ENCODE measurements at regions of chr14 and their contacts with region 1.

Region 1: GRCh38 chr14:90399541-90400444 is 3.0 kb downstream of the CALM1 start:
- DNase-seq: peak; percentile 68 to 96
- H3K4me3 ChIP-seq: peak overlapping the region; percentile 94 to 98
- H3K27ac ChIP-seq: peak overlapping the region; percentile 90 to 97
- H3K4me1 ChIP-seq: peaks cover 0 to 36% of the 10 kb centered on the region in 2 donors
- H3K27me3 ChIP-seq: no peaks in the 10 kb centered on the region
- CTCF ChIP-seq: peak; percentile 97 to 99 (median 98)

Region 2: GRCh38 chr14:89954070-89955028 is 445.4 kb before region 1 on chr14 and contains the start of gene EFCAB11:
- intact Hi-C with region 1: loop called (anchors 10 kb)
- DNase-seq: peak; percentile 87 to 98
- H3K4me3 ChIP-seq: peak within 1 kb of the TSS; percentile 82 to 83
- H3K27ac ChIP-seq: peak within 1 kb of the TSS; percentile 91 to 94
- H3K4me1 ChIP-seq: peaks cover 4 to 11% of the 10 kb centered on the region in 2 donors
- H3K27me3 ChIP-seq: no peaks in the 10 kb centered on the region
- CTCF ChIP-seq: no peak
- total RNA-seq, gene EFCAB11: not detected

Region 3: DNA sequence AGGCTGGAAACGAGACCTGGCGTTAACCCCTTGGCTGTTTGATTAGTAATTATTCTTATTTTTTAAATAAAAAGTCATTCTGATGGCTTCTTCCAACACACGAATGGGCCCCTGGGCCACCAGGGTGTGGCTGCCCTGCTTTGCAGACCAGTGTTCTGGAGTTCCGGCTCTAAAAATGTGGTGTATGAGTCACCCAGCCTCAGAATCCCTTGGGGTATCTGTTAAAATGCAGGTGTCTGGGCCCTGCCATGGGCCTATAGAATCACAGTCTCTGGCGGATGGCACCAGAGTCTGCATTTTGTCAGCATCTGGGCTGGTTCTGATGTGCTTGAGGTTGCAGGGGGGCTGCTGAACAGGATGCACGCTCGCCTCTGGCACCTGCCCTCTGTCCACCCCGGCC is 146.0 kb before region 1 on chr14:
- intact Hi-C with region 1: no loop called
- DNase-seq: no peak
- H3K4me3 ChIP-seq: no peak overlapping the region
- H3K27ac ChIP-seq: no peak overlapping the region
- H3K4me1 ChIP-seq: peaks cover 0 to 4% of the 10 kb centered on the region in 2 donors
- H3K27me3 ChIP-seq: no peaks in the 10 kb centered on the region
- CTCF ChIP-seq: no peak

Region 4: GRCh38 chr14:90383075-90383730 is 16.6 kb before region 1 on chr14:
- intact Hi-C with region 1: loop called (anchors 1 kb)
- DNase-seq: peak; percentile 97 to 100
- H3K4me3 ChIP-seq: peak overlapping the region; percentile 72 to 75
- H3K27ac ChIP-seq: peak overlapping the region; percentile 100
- H3K4me1 ChIP-seq: peaks cover 0 to 16% of the 10 kb centered on the region in 2 donors
- H3K27me3 ChIP-seq: no peaks in the 10 kb centered on the region
- CTCF ChIP-seq: peak in 1 of 3 experiments; percentile 9

Region 5: DNA sequence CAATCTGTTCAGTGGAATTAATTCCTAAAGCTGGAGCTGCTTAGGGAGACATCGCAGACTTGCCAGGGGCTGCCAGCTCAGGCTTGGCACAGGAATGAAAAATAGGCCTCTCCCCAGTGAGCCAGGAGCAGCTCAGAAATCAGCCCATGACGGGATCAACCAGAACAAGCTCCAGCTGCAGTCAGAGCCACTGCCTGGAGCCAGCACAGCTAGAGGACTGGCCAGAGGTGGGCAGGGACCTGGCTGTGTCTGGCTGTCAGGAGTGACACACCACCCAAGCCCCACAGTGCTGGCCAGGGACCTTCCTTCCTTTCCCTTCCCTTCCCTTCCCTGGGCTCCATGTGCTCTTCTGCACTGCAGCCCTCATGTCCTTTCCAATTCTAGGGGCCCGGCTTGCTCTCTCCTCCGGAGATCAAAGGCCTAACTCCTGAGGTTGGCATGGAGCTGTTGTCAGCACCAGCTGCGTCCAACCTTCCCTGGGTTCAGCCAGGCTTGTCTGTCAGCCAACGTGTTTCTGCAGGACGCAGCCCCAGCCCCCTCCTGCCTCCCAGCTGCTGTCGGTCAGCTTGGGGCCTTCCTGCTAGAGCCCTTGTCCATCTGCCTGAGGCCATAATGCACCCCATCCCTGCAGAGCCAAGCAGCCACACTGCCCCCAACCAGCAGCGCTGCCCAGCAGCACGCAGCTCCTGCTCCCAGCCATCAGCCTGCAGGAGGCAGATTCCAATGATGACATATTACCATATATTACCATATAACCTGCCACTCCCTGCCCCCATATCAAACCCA is 146.4 kb after region 1 on chr14:
- intact Hi-C with region 1: loop called (anchors 5 kb)
- DNase-seq: peak; percentile 41 to 88
- H3K4me3 ChIP-seq: peak overlapping the region in 1 of 2 donors; percentile 19
- H3K27ac ChIP-seq: peak overlapping the region; percentile 83 to 84
- H3K4me1 ChIP-seq: peaks cover 12 to 22% of the 10 kb centered on the region in 2 donors
- H3K27me3 ChIP-seq: no peaks in the 10 kb centered on the region
- CTCF ChIP-seq: no peak

Region 6: DNA sequence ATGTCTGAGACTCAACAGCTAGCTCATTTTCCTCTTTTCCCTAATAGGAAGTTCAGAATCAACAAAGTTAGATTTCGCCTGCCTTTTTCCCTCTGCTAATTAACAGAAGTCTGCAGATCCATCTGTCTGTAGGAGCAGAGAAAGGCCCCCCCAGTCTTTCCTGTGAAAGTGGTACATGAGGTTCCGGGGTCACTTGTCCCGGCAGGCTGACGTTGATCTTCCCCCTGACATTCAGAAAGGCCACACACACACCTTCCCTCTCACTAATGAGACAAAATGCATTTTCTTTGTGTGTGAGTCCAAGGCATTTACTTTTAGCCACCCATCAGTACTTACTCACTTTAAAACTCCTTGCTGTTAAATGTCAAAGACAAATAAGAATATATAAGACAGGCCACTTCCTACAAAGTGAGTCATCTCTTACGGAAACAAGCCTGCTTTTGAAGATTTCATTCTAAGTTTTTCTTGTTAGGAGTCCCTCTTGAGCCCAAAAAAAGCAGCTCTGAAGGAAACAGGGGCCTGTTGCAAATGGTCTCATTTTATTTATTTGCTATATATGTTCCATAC is 277.8 kb after region 1 on chr14:
- intact Hi-C with region 1: loop called (anchors 2 kb)
- DNase-seq: no peak
- H3K4me3 ChIP-seq: no peak overlapping the region
- H3K27ac ChIP-seq: peak overlapping the region; percentile 77 to 92
- H3K4me1 ChIP-seq: peaks cover 8 to 20% of the 10 kb centered on the region in 2 donors
- H3K27me3 ChIP-seq: no peaks in the 10 kb centered on the region
- CTCF ChIP-seq: no peak

Region 7: GRCh38 chr14:90827916-90828610 is 428.3 kb after region 1 on chr14:
- intact Hi-C with region 1: loop called (anchors 5 kb)
- DNase-seq: peak; percentile 76 to 96
- H3K4me3 ChIP-seq: peak overlapping the region; percentile 35 to 66
- H3K27ac ChIP-seq: peak overlapping the region; percentile 58 to 82
- H3K4me1 ChIP-seq: peaks cover 4 to 5% of the 10 kb centered on the region in 2 donors
- H3K27me3 ChIP-seq: no peaks in the 10 kb centered on the region
- CTCF ChIP-seq: no peak

Region 8: DNA sequence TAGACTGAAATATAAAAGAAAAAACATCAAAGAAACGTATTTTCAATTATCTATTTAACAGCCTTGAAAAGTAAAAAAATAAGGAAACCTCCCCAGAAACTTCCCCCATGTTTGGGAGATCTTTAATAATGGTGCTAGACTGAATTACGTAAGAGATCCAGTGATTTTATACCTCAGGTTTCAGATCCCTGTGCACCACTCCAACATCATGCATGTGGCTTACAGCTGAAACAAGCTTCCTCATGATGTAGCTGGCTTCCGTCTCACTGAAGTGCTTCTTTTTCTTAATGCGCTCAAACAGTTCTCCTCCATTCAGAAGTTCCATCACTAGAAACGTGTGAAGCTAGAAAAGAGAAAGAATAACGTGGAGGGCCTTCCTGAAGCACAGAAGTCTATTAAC is 494.4 kb after region 1 on chr14:
- intact Hi-C with region 1: no loop called
- DNase-seq: no peak
- H3K4me3 ChIP-seq: no peak overlapping the region
- H3K27ac ChIP-seq: no peak overlapping the region
- H3K4me1 ChIP-seq: no peaks in the 10 kb centered on the region
- H3K27me3 ChIP-seq: no peaks in the 10 kb centered on the region
- CTCF ChIP-seq: no peak